Breast epithelium (tissue), 4 donors: ENCODE measurements at regions of chr20 and their contacts with region 1.

Region 1: GRCh38 chr20:62762801-62763368 is 33.4 kb upstream of the MRGBP start:
- DNase-seq: no peak
- H3K4me3 ChIP-seq: no peak overlapping the region
- H3K27ac ChIP-seq: no peak overlapping the region
- H3K4me1 ChIP-seq: no peaks in the 10 kb centered on the region
- H3K27me3 ChIP-seq: peaks cover 6 to 45% of the 10 kb centered on the region in 2 donors
- CTCF ChIP-seq: no peak
- POLR2A ChIP-seq: no peak

Region 2: GRCh38 chr20:62674370-62674769 is 88.5 kb before region 1 on chr20:
- intact Hi-C with region 1: loop called (anchors 1 kb)
- DNase-seq: no peak
- H3K4me3 ChIP-seq: no peak overlapping the region
- H3K27ac ChIP-seq: no peak overlapping the region
- H3K4me1 ChIP-seq: no peaks in the 10 kb centered on the region
- H3K27me3 ChIP-seq: peaks cover 0 to 35% of the 10 kb centered on the region in 2 donors
- CTCF ChIP-seq: no peak
- POLR2A ChIP-seq: no peak

Region 3: DNA sequence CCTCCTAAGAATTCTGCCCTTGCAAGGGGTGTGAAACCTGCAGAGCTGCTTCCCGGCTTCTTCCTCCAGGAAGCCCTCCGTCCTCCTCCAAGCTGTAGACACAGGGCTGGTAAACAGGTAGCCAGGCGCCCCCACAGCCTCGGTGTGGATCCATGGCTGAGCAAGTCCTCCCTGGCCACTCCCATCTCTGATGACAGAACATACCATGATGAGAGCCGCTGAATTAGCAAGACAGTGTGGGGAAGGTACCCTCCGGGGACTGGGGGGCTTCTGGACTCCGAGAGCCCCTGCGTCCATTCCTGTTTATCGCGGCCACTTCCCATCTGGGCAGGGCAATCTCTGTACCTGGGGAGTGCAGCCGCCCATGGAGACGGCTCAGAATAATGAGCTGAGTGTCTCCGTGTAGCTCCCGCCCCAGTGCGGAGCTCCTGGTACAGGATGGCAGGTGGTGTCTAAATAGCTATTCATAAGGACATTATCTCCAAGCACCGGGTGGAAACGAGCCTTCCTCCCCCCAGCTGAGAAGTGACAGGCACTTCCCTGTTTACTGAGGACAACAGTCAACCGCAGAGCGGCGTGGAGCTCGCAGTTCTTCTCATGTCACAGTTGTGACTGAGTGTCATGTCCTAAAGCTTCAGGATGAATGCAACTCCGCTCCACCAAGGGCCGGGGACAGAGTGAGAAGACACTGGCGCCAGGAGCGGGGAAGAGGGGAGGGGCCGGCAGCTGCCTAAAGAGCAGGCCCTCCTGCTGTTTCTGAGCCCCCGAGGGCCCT is 76.9 kb before region 1 on chr20:
- intact Hi-C with region 1: no loop called
- DNase-seq: no peak
- H3K4me3 ChIP-seq: no peak overlapping the region
- H3K27ac ChIP-seq: no peak overlapping the region
- H3K4me1 ChIP-seq: no peaks in the 10 kb centered on the region
- H3K27me3 ChIP-seq: peaks cover 4 to 33% of the 10 kb centered on the region in 2 donors
- CTCF ChIP-seq: no peak
- POLR2A ChIP-seq: no peak

Region 4: DNA sequence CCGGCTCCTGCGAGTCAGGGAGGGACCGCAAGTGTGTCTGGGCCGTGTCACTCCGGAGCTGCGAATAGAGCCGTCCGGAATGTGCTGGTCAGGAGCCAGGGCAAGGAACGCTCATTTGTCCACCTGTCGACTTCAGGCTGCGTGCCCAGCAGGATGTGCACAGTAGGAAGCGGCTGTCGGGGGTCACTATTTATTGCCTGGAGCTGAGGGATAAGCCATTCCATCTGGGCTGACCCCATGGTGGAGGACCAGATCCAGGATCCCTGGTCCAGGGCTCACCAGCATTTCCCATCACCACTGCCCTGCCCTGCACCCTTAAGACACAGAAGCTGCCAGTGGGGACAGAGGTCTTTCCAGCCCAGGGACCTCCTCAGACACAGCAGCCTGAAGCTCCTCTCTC is 39.5 kb before region 1 on chr20:
- intact Hi-C with region 1: no loop called
- DNase-seq: no peak
- H3K4me3 ChIP-seq: no peak overlapping the region
- H3K27ac ChIP-seq: no peak overlapping the region
- H3K4me1 ChIP-seq: no peaks in the 10 kb centered on the region
- H3K27me3 ChIP-seq: peaks cover 0 to 66% of the 10 kb centered on the region in 2 donors
- CTCF ChIP-seq: no peak
- POLR2A ChIP-seq: no peak

Region 5: GRCh38 chr20:62861726-62862336 is 98.9 kb after region 1 on chr20 and contains the start of gene TCFL5:
- intact Hi-C with region 1: no loop called
- DNase-seq: peak; percentile 78 to 92
- H3K4me3 ChIP-seq: peak within 1 kb of the TSS; percentile 40 to 88 (median 55)
- H3K27ac ChIP-seq: peak within 1 kb of the TSS; percentile 71 to 82
- H3K4me1 ChIP-seq: no peaks in the 10 kb centered on the region
- H3K27me3 ChIP-seq: no peaks in the 10 kb centered on the region
- CTCF ChIP-seq: no peak
- POLR2A ChIP-seq: no peak
- total RNA-seq, gene TCFL5: 7.8 to 21.0 (median 12.5) TPM